Activated CD8-positive, alpha-beta T cell treated with anti-CD3 and anti-CD28 coated beads for 36 hours (primary cell): ENCODE measurements at regions of chr11 and their contacts with region 1.

Region 1: GRCh38 chr11:44596525-44597276 is 31.2 kb downstream of the CD82 start:
- DNase-seq: peak; percentile 89
- ATAC-seq: peak; percentile 70
- H3K4me3 Mint-ChIP-seq: peak overlapping the region; percentile 60
- H3K27ac Mint-ChIP-seq: peak overlapping the region; percentile 91
- H3K4me1 Mint-ChIP-seq: peaks cover 85% of the 10 kb centered on the region
- H3K27me3 Mint-ChIP-seq: no peaks in the 10 kb centered on the region
- CTCF ChIP-seq: no peak

Region 2: DNA sequence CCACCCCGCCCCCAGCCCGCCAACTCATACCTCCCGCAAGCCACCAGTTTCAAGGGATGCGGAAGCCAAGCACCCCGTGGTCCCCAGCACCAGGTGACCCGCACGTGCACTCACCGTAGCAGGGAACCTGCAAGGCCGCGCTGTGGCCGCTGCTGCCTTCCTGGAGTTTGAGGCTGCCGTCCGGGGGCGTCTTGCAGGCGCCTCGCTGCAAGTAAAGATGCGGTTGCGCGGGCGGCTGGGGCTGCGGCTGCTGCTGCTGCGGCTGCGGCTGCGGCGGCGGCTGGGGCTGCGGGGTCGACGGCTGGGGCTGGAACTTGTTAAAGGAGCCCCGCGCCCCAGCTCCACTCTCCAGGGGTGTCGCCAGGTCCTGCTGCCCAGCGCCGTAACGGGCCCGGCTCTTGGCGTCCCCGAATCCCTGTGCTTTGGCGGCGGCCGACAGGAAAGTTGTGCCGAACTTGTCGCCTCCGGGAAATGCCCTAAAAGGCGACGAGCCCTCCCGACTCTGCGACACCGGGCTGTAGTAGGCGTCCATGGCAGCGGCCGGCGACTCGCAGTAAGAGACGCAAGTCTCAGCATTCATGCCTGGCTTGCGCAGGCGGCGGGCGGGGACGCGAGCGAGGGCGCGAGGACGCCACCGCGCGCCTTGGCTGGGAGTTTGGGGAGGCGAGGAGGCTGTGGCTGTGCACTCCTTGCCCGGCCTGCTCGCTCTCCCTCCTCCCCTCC is 287.1 kb before region 1 on chr11 and contains the start of gene ALX4:
- CTCF ChIA-PET with region 1: no interaction called
- POLR2A ChIA-PET with region 1: no interaction called
- intact Hi-C with region 1: no loop called
- DNase-seq: peak; percentile 57
- ATAC-seq: peak; percentile 50
- H3K4me3 Mint-ChIP-seq: no peak within 1 kb of the TSS
- H3K27ac Mint-ChIP-seq: no peak within 1 kb of the TSS
- H3K4me1 Mint-ChIP-seq: peaks cover 20% of the 10 kb centered on the region
- H3K27me3 Mint-ChIP-seq: peaks cover 89% of the 10 kb centered on the region
- CTCF ChIP-seq: no peak
- total RNA-seq, gene ALX4: not detected

Region 3: DNA sequence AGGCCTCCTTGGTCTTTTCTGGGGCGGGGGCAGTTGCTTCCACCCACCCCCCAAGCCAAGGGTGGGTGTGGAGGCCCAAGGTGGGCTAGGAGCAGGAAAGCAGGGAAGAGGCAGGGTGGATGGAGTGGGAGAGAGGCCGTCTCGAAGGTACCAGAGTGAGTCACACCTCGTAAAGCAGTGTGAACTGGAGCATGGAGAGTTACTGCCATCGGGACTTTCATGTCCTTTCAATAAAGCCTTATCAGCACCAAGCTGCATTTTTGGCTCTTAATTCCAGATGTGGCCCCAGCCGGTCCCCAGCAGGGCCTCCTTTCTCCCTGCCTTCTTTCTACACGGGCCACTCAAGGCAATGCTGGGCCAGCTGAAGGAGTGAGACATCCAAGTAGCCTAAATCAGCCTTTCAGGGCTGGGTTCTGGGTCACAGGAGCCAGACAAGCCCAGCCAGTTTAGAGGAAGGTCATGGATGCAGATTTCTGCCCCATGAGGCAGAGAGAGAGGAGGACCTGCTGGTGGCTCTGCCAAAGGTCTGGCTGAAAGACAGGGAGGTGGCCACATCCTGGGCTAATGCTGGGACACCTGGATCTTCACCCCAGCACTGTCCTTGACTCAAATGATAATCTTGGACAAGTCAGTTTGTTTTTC is 90.2 kb before region 1 on chr11:
- CTCF ChIA-PET with region 1: no interaction called
- POLR2A ChIA-PET with region 1: no interaction called
- intact Hi-C with region 1: no loop called
- DNase-seq: no peak
- ATAC-seq: no peak
- H3K4me3 Mint-ChIP-seq: no peak overlapping the region
- H3K27ac Mint-ChIP-seq: no peak overlapping the region
- H3K4me1 Mint-ChIP-seq: no peaks in the 10 kb centered on the region
- H3K27me3 Mint-ChIP-seq: peaks cover 6% of the 10 kb centered on the region
- CTCF ChIP-seq: no peak

Region 4: GRCh38 chr11:44565211-44565952 is 31.3 kb before region 1 on chr11 and contains the start of gene CD82:
- CTCF ChIA-PET with region 1: no interaction called
- POLR2A ChIA-PET with region 1: interaction called, 17 read pairs
- intact Hi-C with region 1: no loop called
- DNase-seq: peak; percentile 99
- ATAC-seq: peak; percentile 88
- H3K4me3 Mint-ChIP-seq: peak within 1 kb of the TSS; percentile 82
- H3K27ac Mint-ChIP-seq: peak within 1 kb of the TSS; percentile 92
- H3K4me1 Mint-ChIP-seq: peaks cover 47% of the 10 kb centered on the region
- H3K27me3 Mint-ChIP-seq: no peaks in the 10 kb centered on the region
- CTCF ChIP-seq: peak; percentile 30
- total RNA-seq, gene CD82: 289 to 319 TPM

Region 5: GRCh38 chr11:44574610-44575287 is 22.0 kb before region 1 on chr11:
- CTCF ChIA-PET with region 1: interaction called, 4 read pairs
- POLR2A ChIA-PET with region 1: interaction called, 17 read pairs
- intact Hi-C with region 1: loop called (anchors 2 kb)
- DNase-seq: peak; percentile 84
- ATAC-seq: peak; percentile 53
- H3K4me3 Mint-ChIP-seq: peak overlapping the region; percentile 71
- H3K27ac Mint-ChIP-seq: peak overlapping the region; percentile 100
- H3K4me1 Mint-ChIP-seq: peaks cover 90% of the 10 kb centered on the region
- H3K27me3 Mint-ChIP-seq: no peaks in the 10 kb centered on the region
- CTCF ChIP-seq: no peak

Region 6: DNA sequence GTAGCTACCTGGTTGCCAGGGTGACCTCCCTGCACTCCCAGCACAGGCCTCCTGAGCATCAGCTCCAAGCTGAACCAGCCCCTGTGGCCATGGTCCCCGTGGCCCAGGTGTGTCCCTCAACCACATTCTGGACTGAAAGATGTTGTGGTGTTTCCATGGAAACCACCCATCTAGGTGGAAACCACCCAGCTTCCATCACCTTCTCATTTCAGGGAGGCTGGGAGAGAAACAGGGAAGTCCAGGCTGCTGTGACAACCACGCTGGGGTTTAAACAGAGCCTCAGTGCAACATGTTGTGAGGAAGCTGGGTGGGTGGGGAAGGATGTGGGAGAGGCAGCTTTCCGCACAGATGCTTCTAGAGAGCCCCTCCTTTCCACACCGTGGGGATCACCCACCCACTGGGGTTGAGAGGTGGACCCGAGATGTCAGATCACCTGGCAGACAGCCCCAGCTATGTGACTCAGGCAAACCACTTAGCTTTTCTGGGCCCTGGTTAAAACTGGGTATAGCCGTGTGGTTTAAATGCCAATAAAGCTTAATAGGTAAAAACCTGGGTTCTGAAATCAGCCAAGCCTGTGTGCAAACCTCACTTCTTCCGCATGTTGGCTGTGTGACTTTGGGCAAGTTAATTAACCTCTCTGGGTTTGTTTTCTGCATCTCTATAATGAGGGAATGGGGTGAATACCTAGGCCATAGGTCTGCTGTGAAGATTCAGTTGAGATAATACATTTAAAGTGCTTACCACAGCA is 15.2 kb after region 1 on chr11:
- CTCF ChIA-PET with region 1: interaction called, 6 read pairs
- POLR2A ChIA-PET with region 1: interaction called, 12 read pairs
- intact Hi-C with region 1: no loop called
- DNase-seq: peak; percentile 90
- ATAC-seq: peak; percentile 79
- H3K4me3 Mint-ChIP-seq: no peak overlapping the region
- H3K27ac Mint-ChIP-seq: peak overlapping the region; percentile 89
- H3K4me1 Mint-ChIP-seq: peaks cover 68% of the 10 kb centered on the region
- H3K27me3 Mint-ChIP-seq: no peaks in the 10 kb centered on the region
- CTCF ChIP-seq: no peak